Sigmoid colon (tissue), 7 donors: ENCODE measurements at regions of chr1 and their contacts with region 1.

Region 1: DNA sequence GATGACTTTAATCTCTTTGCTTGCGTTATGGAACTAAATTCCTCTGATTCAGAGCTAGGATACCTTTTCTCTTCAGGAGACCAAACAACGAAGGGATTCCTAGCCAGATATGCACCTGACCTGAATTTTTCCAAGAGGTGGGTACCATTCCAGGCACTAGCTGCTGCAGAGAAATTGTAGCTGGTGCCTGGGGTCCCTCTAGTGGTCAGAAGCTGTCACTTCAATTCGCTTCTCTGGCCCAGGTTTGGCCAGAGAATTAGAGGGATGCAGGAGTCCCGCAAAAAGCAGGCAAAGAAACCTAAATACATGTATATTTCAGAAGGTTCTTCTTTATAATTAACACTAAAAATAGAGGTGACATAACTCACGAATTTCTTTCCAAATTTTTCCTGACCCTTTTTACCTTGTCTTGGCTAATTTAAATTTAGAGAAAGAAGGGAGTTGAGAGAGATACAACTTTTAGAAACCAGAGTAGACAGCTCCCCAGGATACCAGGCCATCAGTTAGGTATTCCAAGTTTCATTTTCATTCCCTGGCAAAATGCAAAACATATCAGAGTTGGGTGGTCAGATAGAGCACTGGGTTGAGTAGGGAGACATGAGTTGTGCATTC is 9.6 kb downstream of the ACKR1 start:
- DNase-seq: no peak
- H3K4me3 ChIP-seq: no peak overlapping the region
- H3K27ac ChIP-seq: no peak overlapping the region
- H3K4me1 ChIP-seq: no peaks in the 10 kb centered on the region
- H3K27me3 ChIP-seq: peaks cover 0 to 50% (median 0%) of the 10 kb centered on the region in 3 donors
- CTCF ChIP-seq: peak in 3 of 4 experiments; percentile 48 to 85 (median 81)
- EP300 ChIP-seq: no peak
- POLR2A ChIP-seq: no peak

Region 2: GRCh38 chr1:159132271-159132881 is 81.9 kb before region 1 on chr1:
- intact Hi-C with region 1: loop called (anchors 1 kb)
- DNase-seq: peak; percentile 66
- H3K4me3 ChIP-seq: no peak overlapping the region
- H3K27ac ChIP-seq: no peak overlapping the region
- H3K4me1 ChIP-seq: no peaks in the 10 kb centered on the region
- H3K27me3 ChIP-seq: no peaks in the 10 kb centered on the region
- CTCF ChIP-seq: peak; percentile 20 to 65 (median 38)
- EP300 ChIP-seq: no peak
- POLR2A ChIP-seq: no peak

Region 3: GRCh38 chr1:159352436-159352835 is 138.2 kb after region 1 on chr1:
- intact Hi-C with region 1: no loop called
- DNase-seq: no peak
- H3K4me3 ChIP-seq: no peak overlapping the region
- H3K27ac ChIP-seq: no peak overlapping the region
- H3K4me1 ChIP-seq: no peaks in the 10 kb centered on the region
- H3K27me3 ChIP-seq: no peaks in the 10 kb centered on the region
- CTCF ChIP-seq: no peak
- EP300 ChIP-seq: no peak
- POLR2A ChIP-seq: no peak